ENCODE measurements at regions of chr7 and their contacts with region 1.

Region 1: DNA sequence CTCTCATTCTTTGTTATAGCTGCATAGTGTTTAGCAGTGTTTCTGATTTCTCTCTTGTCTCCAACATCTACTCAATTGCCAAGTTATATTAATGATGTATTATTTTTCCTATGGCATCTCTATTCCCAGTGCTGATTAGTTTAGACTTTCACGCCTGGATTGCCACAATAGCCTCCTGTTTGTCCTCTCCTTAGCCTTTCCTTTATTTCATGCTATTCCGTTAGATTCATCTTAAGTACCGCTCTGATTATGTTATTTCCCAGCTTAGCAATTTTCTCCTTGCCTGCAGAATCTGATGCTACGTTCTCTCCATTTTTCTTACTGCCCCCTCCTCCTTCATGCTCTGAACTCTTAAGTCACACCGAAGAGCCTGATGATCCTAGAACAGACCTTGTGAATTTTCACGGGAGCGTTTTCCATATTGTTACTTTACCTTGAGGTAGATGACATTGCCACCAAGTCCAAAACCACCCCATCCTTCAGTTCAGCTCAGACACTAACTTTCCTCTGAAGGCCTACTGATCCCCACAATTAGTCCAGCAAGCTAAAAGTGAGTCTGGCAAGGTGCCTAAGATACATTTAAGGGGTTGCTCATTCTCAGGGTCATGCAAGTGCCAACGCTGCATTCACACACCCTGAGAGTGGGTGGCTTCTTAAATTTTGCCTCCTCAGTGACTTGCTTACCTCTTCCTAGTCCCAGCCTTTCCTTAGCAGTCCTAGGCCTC is 6.6 kb upstream of the NRF1 start:
- DNase-seq: no peak
- H3K4me3 ChIP-seq: no peak overlapping the region
- H3K27ac ChIP-seq: no peak overlapping the region
- H3K4me1 ChIP-seq: no peaks in the 10 kb centered on the region
- H3K27me3 ChIP-seq: no peaks in the 10 kb centered on the region
- CTCF ChIP-seq: no peak

Region 2: GRCh38 chr7:129652914-129653313 is 48.0 kb after region 1 on chr7:
- CTCF ChIA-PET with region 1: no interaction called
- dilution Hi-C with region 1: loop called (anchors 5 kb)
- in situ Hi-C with region 1: no loop called
- intact Hi-C with region 1: no loop called
- DNase-seq: no peak
- H3K4me3 ChIP-seq: no peak overlapping the region
- H3K27ac ChIP-seq: no peak overlapping the region
- H3K4me1 ChIP-seq: peaks cover 13% of the 10 kb centered on the region
- H3K27me3 ChIP-seq: no peaks in the 10 kb centered on the region
- CTCF ChIP-seq: no peak